ENCODE measurements at regions of chr1 and their contacts with region 1.

Region 1: GRCh38 chr1:17439250-17440073 is at the start of gene RCC2:
- DNase-seq: peak; percentile 44 to 79
- ATAC-seq: peak; percentile 62 to 65
- H3K4me3 ChIP-seq: peak within 1 kb of the TSS; percentile 98
- H3K27ac ChIP-seq: peak within 1 kb of the TSS; percentile 97 to 99
- H3K4me1 ChIP-seq: peaks cover 51% of the 10 kb centered on the region
- CTCF ChIP-seq: peak; percentile 48
- EP300 ChIP-seq: no peak
- POLR2A ChIP-seq: peak; percentile 57
- RAD21 ChIP-seq: no peak
- polyA plus RNA-seq, gene RCC2: 58.3 and 60.9 TPM in 2 replicates

Region 2: DNA sequence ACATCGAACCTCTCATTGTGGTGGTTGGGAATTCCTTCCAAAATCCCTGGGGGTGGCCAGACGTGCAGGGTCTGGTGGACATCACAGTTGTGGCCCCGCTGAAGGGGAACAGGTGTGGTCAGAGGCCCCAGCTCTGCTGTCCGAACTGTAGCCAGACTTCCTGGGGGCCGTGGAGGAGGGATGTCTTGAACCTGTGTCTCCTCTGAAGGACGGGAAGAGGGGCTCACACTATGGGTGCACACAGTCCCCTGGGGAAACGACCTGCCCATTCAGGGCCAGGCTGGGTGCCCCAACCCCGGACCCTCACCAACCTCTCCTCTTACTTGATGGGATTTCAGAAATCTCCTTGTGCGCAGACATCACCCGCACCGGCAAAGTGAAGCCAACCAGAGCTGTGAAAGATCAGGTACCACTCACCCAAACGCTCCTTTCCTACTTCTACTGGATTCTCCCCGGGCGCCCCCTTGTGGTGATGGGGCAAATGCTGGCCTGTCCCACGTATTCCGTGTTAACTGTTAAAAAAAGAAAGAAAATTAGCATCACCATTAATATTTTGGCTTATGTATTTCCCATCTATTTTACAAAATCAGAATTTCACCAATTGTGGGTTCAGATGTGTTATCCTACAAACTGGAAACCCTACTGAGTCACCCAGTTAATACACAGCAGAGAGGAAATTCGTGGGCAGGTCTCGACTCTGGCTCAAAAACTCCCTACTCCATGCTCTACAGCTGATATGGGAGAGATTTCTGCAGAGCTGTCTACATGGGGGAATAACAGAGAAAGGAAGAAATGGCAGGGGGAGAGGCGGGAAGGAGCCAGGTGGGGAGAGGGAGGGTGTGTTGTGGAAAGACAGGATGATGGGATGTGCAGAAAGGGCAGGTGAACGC is 103.4 kb before region 1 on chr1:
- CTCF ChIA-PET with region 1: no interaction called
- POLR2A ChIA-PET with region 1: no interaction called
- DNase-seq: peak; percentile 40 to 56
- ATAC-seq: peak; percentile 95 to 97
- H3K4me3 ChIP-seq: no peak overlapping the region
- H3K27ac ChIP-seq: peak overlapping the region; percentile 23 to 79; a peak in 5 of 6 replicates
- H3K4me1 ChIP-seq: no peaks in the 10 kb centered on the region
- CTCF ChIP-seq: peak; percentile 76
- EP300 ChIP-seq: no peak
- POLR2A ChIP-seq: no peak
- RAD21 ChIP-seq: peak; percentile 78 to 82

Region 3: DNA sequence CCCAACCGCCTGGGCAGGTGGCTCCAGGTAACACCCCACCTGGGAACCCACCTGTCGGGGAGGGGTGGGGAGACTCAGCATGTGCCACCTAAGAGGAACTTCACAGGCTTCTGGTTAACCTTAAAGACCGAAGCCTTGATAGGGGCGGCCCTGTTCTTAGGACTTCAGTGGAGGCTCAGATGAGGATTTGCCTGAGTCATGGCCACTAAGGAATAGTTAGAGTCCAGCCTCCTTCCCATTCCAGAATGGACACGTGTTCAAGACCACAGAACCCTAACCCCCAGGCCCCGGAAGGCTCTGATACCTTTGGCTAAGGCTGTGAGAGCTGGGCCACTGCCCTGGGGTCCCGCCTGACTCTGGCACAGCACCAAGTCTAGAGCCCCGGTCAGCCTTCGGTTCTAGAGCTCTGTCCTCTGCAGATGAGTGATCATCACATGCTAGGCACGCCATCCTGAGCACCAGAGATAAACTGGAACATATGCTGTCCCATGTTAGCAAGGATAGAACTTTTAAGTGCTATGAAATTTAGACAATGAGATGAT is 47.2 kb before region 1 on chr1:
- CTCF ChIA-PET with region 1: no interaction called
- POLR2A ChIA-PET with region 1: no interaction called
- DNase-seq: no peak
- ATAC-seq: no peak
- H3K4me3 ChIP-seq: no peak overlapping the region
- H3K27ac ChIP-seq: no peak overlapping the region
- H3K4me1 ChIP-seq: no peaks in the 10 kb centered on the region
- CTCF ChIP-seq: no peak
- EP300 ChIP-seq: no peak
- POLR2A ChIP-seq: no peak
- RAD21 ChIP-seq: no peak

Region 4: DNA sequence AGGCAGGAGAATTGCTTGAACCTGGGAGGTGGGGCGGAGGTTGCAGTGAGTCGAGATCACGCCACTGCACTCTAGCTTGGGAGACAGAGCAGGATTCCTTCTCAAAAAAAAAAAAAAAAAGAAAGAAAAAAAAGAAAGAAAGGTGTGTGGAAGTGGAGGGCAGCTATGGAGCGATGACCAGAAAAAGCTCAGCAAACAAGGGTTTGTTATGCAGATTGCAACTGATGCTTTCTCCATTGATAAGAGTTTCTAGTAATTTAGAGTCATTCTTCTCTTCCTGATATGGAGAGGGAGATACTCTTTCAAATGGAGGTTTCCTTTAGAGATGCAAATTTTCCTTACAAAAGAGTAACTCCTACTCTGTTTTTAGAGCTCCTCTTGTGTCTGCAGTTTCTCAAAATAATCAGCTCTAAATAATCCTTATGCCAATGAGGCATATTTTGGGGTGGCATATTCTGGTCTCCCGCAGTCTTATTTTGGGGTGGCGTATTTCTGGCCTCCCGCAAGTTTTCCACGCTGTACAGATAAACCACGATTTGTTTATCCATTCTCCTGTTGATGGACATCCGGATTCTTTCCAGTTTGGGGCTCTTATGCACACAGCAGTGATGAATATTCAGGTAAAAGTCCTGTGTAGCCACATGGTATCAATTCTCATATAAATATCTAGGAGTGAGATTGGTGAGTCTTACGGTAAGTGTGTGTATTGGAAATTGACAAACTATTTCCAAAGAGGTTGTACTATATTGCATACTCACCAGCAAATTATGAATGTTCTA is 30.7 kb after region 1 on chr1:
- CTCF ChIA-PET with region 1: interaction called, 11 read pairs
- POLR2A ChIA-PET with region 1: no interaction called
- DNase-seq: no peak
- ATAC-seq: no peak
- H3K4me3 ChIP-seq: no peak overlapping the region
- H3K27ac ChIP-seq: no peak overlapping the region
- H3K4me1 ChIP-seq: peaks cover 4% of the 10 kb centered on the region; the same call in 1 of the 3 replicates
- CTCF ChIP-seq: no peak
- EP300 ChIP-seq: no peak
- POLR2A ChIP-seq: no peak
- RAD21 ChIP-seq: no peak

Region 5: GRCh38 chr1:17475729-17476128 is 36.3 kb after region 1 on chr1:
- CTCF ChIA-PET with region 1: interaction called, 11 read pairs
- POLR2A ChIA-PET with region 1: interaction called, 3 read pairs
- DNase-seq: peak in 1 of 2 experiments; percentile 65
- ATAC-seq: peak; percentile 81 to 98
- H3K4me3 ChIP-seq: no peak overlapping the region
- H3K27ac ChIP-seq: peak overlapping the region; percentile 42 to 64; a peak in 4 of 6 replicates
- H3K4me1 ChIP-seq: peaks cover 22% of the 10 kb centered on the region; the same call in 2 of the 3 replicates
- CTCF ChIP-seq: no peak
- EP300 ChIP-seq: no peak
- POLR2A ChIP-seq: no peak
- RAD21 ChIP-seq: no peak

Region 6: GRCh38 chr1:17581389-17582123 is 142.1 kb after region 1 on chr1:
- CTCF ChIA-PET with region 1: no interaction called
- POLR2A ChIA-PET with region 1: interaction called, 10 read pairs
- DNase-seq: no peak
- ATAC-seq: 0 out of 6 replicates have a peak, but pooled peaks of 1 of the 2 experiments have one; percentile 16
- H3K4me3 ChIP-seq: no peak overlapping the region
- H3K27ac ChIP-seq: peak overlapping the region; percentile 49 to 71; a peak in 4 of 6 replicates
- H3K4me1 ChIP-seq: peaks cover 52% of the 10 kb centered on the region
- CTCF ChIP-seq: no peak
- EP300 ChIP-seq: no peak
- POLR2A ChIP-seq: no peak
- RAD21 ChIP-seq: no peak

Region 7: DNA sequence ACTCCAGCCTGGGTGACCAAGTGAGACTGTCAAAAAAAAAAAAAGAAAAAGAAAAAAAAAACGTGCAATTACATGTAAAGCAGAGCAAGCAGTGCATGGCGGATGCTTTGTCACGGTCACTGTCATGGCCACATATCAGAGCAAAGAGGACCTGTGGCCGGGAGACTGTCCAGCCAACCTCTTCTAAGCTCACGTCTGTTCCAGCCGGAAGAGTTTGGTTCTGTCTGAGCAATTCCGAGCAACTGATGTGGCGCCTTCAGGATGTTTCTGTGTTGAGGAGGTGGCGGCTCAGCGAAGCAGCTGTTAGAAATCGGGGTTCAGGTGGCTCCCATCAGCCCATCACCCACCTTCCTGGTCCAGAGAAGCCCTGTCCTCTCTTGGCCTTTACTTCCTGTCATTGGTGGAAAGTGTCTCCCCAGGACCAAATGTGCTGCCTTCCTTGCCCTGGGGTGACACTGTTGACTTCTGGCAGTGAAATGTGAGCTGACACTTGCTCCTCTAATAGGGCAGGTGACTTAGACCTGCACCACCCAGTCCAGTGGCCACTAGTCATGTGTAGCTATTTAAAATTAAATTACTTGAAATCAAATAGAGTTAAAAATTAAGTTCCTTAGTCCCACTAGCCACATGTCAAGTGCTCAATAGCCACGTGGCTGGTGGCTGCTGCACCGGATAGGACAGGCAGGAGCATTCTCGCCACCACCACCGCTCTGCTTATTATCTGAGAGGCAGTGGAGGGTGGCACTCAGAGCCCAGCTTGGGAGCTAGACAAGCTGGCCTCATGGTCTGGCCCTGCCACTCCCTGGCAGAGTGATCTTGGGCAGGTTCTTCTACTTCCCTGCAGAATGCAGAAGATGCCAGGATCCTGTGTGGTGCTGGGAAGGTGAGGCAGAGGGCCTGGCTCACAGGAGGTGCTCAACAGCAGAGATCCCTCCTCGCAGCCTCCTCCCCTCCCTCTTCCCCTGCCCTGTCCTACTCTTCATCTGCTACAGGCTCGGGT is 160.1 kb after region 1 on chr1:
- CTCF ChIA-PET with region 1: no interaction called
- POLR2A ChIA-PET with region 1: no interaction called
- DNase-seq: no peak
- ATAC-seq: no peak
- H3K4me3 ChIP-seq: no peak overlapping the region
- H3K27ac ChIP-seq: no peak overlapping the region
- H3K4me1 ChIP-seq: no peaks in the 10 kb centered on the region
- CTCF ChIP-seq: no peak
- EP300 ChIP-seq: no peak
- POLR2A ChIP-seq: no peak
- RAD21 ChIP-seq: no peak

Measured in A549 (cell line).